Activated CD4-positive, alpha-beta memory T cell treated with anti-CD3 and anti-CD28 coated beads for 36 hours (primary cell): ENCODE measurements at regions of chr13 and their contacts with region 1.

Region 1: DNA sequence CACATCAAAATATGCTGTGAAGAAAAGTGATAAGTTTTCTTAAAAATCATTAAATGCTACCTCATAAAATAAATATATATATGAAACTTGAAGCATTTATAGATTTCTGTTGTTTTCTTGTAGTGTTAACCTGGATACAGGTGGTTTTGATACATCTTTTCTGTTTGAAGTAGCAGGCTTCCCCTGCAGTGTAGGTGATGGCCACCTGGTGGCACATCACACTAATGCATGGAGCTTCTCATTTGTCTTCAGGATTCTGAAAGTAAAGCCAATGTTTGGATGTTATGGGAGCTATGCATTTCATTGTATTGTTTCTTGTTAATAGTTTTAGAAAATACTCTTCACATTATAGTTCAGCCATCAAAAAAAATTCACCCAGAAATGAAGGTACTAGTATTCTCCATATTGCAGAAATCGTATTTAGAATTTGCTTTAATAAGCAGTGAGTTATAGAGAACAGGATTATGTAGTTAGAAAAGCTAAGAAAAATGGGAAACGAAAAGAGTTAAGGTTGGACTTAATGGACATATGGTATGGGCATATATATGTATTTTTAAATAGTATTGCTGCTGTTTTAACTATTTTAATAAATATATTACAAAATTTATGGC is 18.7 kb downstream of the GPR180 start:
- DNase-seq: peak; percentile 40
- H3K4me3 Mint-ChIP-seq: no peak overlapping the region
- H3K27ac Mint-ChIP-seq: no peak overlapping the region
- H3K4me1 Mint-ChIP-seq: peaks cover 9% of the 10 kb centered on the region
- H3K27me3 Mint-ChIP-seq: no peaks in the 10 kb centered on the region

Region 2: GRCh38 chr13:94435604-94436226 is 184.7 kb before region 1 on chr13:
- CTCF ChIA-PET with region 1: interaction called, 174 read pairs
- POLR2A ChIA-PET with region 1: no interaction called
- intact Hi-C with region 1: loop called (anchors 1 kb)
- DNase-seq: no peak
- H3K4me3 Mint-ChIP-seq: no peak overlapping the region
- H3K27ac Mint-ChIP-seq: no peak overlapping the region
- H3K4me1 Mint-ChIP-seq: peaks cover 17% of the 10 kb centered on the region
- H3K27me3 Mint-ChIP-seq: peaks cover 3% of the 10 kb centered on the region

Region 3: DNA sequence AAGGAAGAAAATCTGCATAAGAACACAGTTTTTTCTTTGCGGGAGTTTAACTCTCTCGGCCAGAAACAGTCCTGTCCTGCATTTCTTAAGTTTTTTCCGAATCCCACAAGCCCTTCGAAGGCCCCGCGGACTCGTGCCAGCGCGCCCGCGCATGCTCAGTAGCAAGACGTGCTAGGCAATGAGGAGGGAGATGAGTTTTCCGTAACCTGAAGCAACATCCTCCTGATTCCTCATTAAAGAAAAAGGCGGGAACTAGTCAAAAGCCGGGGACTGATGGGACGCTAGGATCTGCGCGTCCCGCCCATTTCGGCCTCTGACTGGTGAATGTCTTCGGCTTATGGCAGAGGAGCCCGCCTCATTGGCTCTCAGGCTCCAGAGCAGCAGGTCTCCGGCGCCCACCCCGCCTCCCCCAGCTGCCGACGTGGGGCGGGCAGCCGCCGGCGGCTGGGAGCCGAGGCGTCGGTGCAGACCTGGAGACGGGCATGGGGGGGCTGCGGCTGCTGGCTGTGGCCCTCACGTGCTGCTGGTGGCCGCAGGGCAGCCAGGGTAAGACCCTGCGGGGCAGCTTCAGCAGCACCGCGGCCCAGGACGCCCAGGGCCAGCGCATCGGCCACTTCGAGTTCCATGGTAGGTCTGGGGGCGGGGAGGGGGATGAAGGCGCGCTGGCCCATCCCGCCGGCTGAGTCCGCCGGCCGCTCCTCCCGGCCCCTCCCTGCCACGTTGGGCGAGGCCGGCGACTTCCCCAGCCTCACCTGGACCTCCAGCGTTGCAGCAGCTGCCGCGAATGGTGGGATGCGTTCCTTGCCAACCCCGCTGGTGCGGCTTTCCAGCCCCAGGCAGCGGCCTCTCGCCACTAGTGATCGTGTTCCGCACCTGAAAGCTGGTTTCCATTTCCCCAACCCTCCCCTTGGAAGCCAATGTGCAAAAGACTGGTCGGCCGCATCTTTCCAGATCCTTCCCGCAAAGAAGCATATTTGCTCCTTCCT is 18.7 kb before region 1 on chr13 and contains the start of gene GPR180:
- CTCF ChIA-PET with region 1: interaction called, 14 read pairs
- POLR2A ChIA-PET with region 1: interaction called, 3 read pairs
- intact Hi-C with region 1: no loop called
- DNase-seq: peak; percentile 95
- H3K4me3 Mint-ChIP-seq: peak within 1 kb of the TSS; percentile 88
- H3K27ac Mint-ChIP-seq: peak within 1 kb of the TSS; percentile 87
- H3K4me1 Mint-ChIP-seq: peaks cover 29% of the 10 kb centered on the region
- H3K27me3 Mint-ChIP-seq: no peaks in the 10 kb centered on the region
- total RNA-seq, gene GPR180: 9.1 to 9.7 TPM

Region 4: DNA sequence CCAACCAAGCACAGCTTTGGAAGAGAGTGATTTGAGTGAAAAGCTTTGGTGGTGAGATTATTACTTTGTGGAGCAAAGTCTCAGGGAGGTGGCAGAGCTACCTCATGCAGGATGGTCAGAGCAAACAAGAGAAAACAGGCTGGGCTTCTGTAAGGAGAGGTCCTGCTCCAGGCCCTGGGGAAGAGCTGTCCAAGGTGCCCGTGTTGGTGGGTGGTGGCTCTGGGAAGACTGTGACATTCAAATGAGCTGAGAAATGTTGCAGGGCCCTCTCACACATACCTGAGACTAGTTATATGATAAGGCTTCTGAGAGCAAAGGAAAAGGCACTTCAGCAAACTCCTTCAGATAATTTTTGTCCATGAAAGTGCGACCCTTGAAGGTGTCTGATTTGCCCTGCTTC is 297.4 kb after region 1 on chr13:
- CTCF ChIA-PET with region 1: no interaction called
- POLR2A ChIA-PET with region 1: no interaction called
- intact Hi-C with region 1: no loop called
- DNase-seq: no peak
- H3K4me3 Mint-ChIP-seq: no peak overlapping the region
- H3K27ac Mint-ChIP-seq: no peak overlapping the region
- H3K4me1 Mint-ChIP-seq: no peaks in the 10 kb centered on the region
- H3K27me3 Mint-ChIP-seq: peaks cover 8% of the 10 kb centered on the region